ENCODE measurements at regions of chr19 and their contacts with region 1.

Region 1: DNA sequence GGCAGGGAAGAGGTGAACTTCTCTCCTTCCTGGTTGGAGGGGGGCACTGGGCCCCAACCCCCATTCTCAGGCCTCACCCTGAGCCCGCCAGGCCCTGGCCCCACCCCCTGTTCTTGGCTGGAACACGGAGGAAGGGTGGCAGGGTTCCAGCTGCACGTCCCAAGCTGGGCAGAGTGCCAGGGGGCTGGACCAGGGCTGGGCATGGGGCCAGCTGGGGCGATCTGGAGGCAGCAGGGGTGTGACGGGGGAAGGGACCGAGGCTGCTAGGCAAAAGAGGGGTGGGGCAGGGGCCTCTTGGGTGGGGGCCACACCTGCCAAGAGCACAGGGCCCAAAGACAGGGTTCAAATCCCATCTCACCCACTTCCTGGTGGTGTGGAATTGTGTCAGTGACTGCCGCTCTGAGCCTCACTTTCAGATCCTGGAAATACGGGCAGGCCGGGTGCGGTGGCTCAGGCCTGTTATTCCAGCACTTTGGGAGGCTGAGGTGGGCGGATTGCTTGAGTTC is 2.2 kb downstream of the HIF3A start:
- DNase-seq: peak; percentile 99
- H3K4me3 ChIP-seq: peak overlapping the region; percentile 58 to 70 (median 65)
- H3K27ac ChIP-seq: peak overlapping the region; percentile 87 to 97 (median 91)
- H3K4me1 ChIP-seq: peaks cover 0 to 69% (median 59%) of the 10 kb centered on the region in 4 donors
- H3K27me3 ChIP-seq: no peaks in the 10 kb centered on the region
- CTCF ChIP-seq: no peak
- EP300 ChIP-seq: peak in 3 of 4 donors; percentile 71 to 92 (median 87)
- POLR2A ChIP-seq: no peak

Region 2: GRCh38 chr19:44746946-44747738 is 1551.9 kb before region 1 on chr19:
- intact Hi-C with region 1: loop called (anchors 5 kb)
- DNase-seq: peak; percentile 98
- H3K4me3 ChIP-seq: peak overlapping the region; percentile 59 to 83 (median 76)
- H3K27ac ChIP-seq: peak overlapping the region; percentile 90 to 98 (median 94)
- H3K4me1 ChIP-seq: peaks cover 0 to 89% (median 79%) of the 10 kb centered on the region in 4 donors
- H3K27me3 ChIP-seq: no peaks in the 10 kb centered on the region
- CTCF ChIP-seq: no peak
- EP300 ChIP-seq: peak in 3 of 4 donors; percentile 36 to 87 (median 61)
- POLR2A ChIP-seq: peak; percentile 58 to 76

Region 3: DNA sequence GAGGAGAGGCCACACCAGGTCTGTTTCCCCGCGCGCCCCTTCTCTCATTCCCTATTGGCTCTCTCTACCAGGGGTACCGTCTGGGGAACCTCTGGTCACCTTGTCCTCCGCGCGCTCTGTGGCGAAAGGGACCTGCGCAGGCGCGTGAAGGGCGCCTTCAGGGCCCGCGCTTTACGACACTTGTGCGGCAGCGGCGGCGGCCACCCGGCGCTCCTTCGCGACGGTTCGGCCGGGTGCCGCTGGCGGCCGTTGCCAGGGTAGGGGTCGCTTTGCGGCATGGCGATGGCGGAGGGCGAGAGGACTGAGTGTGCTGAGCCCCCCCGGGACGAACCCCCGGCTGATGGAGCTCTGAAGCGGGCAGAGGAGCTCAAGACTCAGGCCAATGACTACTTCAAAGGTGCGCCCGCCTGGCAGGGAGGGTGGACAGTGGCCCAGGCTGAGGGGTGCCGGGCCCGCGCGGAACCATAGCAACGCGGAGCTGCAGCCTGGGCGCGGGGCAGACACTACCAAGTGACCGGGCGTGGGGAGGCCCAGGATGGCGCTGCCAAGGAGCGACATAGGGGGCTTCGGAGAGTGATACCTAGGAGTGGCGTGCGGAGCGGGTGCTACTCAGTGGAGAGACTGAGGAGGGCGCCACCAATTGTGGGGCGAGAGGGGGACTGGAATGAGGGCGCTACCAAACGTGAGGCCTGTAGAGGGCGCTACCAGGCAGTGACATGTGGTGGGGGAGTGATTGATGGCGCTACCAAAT is 47.9 kb after region 1 on chr19 and contains the start of gene PPP5C:
- intact Hi-C with region 1: loop called (anchors 2 kb)
- DNase-seq: peak; percentile 96
- H3K4me3 ChIP-seq: peak within 1 kb of the TSS; percentile 73 to 99 (median 96)
- H3K27ac ChIP-seq: peak within 1 kb of the TSS; percentile 81 to 90 (median 88)
- H3K4me1 ChIP-seq: peaks cover 0 to 56% (median 53%) of the 10 kb centered on the region in 4 donors
- H3K27me3 ChIP-seq: no peaks in the 10 kb centered on the region
- CTCF ChIP-seq: peak; percentile 57 to 85 (median 76)
- EP300 ChIP-seq: no peak
- POLR2A ChIP-seq: peak; percentile 37 to 74
- total RNA-seq, gene PPP5C: 37.1 to 61.5 (median 46.5) TPM

Region 4: GRCh38 chr19:46404055-46404752 is 105.1 kb after region 1 on chr19:
- intact Hi-C with region 1: no loop called
- DNase-seq: peak; percentile 82
- H3K4me3 ChIP-seq: peak overlapping the region; percentile 4 to 41 (median 29)
- H3K27ac ChIP-seq: peak overlapping the region; percentile 23 to 70 (median 60)
- H3K4me1 ChIP-seq: peaks cover 0 to 30% (median 23%) of the 10 kb centered on the region in 4 donors
- H3K27me3 ChIP-seq: peaks cover 14 to 77% (median 69%) of the 10 kb centered on the region in 3 donors
- CTCF ChIP-seq: peak in 1 of 4 experiments; percentile 13
- EP300 ChIP-seq: no peak
- POLR2A ChIP-seq: no peak

Measured in sigmoid colon (tissue), 7 donors.